Activated B cell treated with CpG ODN at 0.5 μM for 24 hours (primary cell): ENCODE measurements at regions of chr3 and their contacts with region 1.

Region 1: DNA sequence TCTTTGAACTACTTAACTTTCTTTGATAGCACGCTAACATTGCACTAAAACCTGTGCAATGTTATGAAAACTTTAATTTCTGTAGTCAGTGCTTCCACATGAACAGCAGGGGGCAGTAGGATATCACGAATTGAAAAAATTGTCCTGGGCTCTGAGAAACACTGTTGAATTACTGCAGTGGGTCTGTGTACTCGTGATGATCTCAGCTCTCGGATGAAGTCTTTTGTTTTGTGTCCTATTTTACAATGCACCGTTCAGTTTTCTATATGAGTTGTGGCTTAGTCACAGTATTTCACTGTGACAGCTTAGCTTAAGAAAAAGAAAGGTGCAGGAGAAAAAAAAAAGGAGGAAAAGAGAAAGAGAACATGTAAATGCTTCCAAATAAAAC is 141.3 kb upstream of the CCDC54 start:
- DNase-seq: no peak
- ATAC-seq: peak; percentile 60
- H3K4me3 Mint-ChIP-seq: peak overlapping the region; percentile 3
- H3K27ac Mint-ChIP-seq: no peak overlapping the region
- H3K4me1 Mint-ChIP-seq: peaks cover 10% of the 10 kb centered on the region
- H3K27me3 Mint-ChIP-seq: peaks cover 3% of the 10 kb centered on the region
- CTCF ChIP-seq: peak; percentile 83

Region 2: DNA sequence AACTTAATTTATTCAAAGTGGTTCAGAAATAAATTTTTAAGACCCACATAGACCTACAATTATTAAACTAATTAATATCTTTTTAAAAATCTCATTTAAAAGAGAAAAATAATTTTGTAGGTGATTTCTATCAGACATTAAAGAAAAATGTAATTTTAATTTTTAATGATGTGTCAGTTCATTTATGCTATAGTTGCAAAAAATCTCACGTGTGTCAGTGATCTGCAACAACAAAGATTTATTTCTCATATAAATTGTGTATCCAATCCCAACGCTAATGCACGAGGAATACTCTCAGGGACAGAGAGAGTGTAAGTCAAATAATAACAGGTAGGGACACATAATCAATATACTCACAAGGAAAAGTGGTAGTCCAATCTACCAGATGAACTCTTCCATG is 315.3 kb before region 1 on chr3:
- CTCF ChIA-PET with region 1: no interaction called
- POLR2A ChIA-PET with region 1: no interaction called
- intact Hi-C with region 1: no loop called
- DNase-seq: no peak
- ATAC-seq: no peak
- H3K4me3 Mint-ChIP-seq: no peak overlapping the region
- H3K27ac Mint-ChIP-seq: no peak overlapping the region
- H3K4me1 Mint-ChIP-seq: no peaks in the 10 kb centered on the region
- H3K27me3 Mint-ChIP-seq: peaks cover 3% of the 10 kb centered on the region
- CTCF ChIP-seq: no peak

Region 3: GRCh38 chr3:107045791-107046190 is 190.1 kb before region 1 on chr3:
- CTCF ChIA-PET with region 1: no interaction called
- POLR2A ChIA-PET with region 1: no interaction called
- intact Hi-C with region 1: no loop called
- DNase-seq: no peak
- ATAC-seq: no peak
- H3K4me3 Mint-ChIP-seq: no peak overlapping the region
- H3K27ac Mint-ChIP-seq: no peak overlapping the region
- H3K4me1 Mint-ChIP-seq: no peaks in the 10 kb centered on the region
- H3K27me3 Mint-ChIP-seq: no peaks in the 10 kb centered on the region
- CTCF ChIP-seq: no peak

Region 4: DNA sequence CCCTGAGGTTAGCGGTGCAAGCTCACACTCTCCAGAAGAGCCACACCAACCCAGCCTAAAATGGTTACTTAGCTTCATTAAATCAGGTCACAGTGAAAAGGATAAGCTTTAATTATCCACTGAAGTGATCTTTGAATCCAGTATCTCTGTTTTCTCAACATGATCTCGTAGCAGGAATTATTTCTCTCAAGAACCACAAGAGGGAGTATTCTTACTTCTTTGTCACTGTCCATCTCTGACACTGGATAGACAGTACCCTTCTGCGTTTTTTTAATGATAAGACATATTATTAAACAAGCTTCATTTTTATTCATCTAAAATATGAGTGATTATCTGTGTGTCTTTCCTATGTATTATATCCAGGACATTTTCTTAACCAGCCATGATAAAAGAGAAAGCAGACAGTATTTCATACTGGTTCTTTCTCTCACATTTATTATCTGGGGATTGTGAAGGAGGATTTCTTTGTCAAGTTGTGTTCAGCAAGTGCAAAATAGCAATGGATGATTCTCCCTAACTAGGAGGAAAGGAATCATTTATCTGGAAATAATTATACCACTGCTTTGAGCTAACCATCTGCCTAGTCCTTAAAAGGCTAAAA is 36.0 kb after region 1 on chr3:
- CTCF ChIA-PET with region 1: interaction called, 5 read pairs
- POLR2A ChIA-PET with region 1: no interaction called
- intact Hi-C with region 1: loop called (anchors 5 kb)
- DNase-seq: no peak
- ATAC-seq: peak; percentile 54
- H3K4me3 Mint-ChIP-seq: no peak overlapping the region
- H3K27ac Mint-ChIP-seq: no peak overlapping the region
- H3K4me1 Mint-ChIP-seq: peaks cover 2% of the 10 kb centered on the region
- H3K27me3 Mint-ChIP-seq: peaks cover 3% of the 10 kb centered on the region
- CTCF ChIP-seq: no peak

Region 5: GRCh38 chr3:107522510-107523288 is 286.8 kb after region 1 on chr3 and contains the start of gene BBX:
- CTCF ChIA-PET with region 1: no interaction called
- POLR2A ChIA-PET with region 1: interaction called, 3 read pairs
- intact Hi-C with region 1: loop called (anchors 1 kb)
- DNase-seq: peak; percentile 89
- ATAC-seq: peak; percentile 87
- H3K4me3 Mint-ChIP-seq: peak within 1 kb of the TSS; percentile 96
- H3K27ac Mint-ChIP-seq: peak within 1 kb of the TSS; percentile 98
- H3K4me1 Mint-ChIP-seq: peaks cover 37% of the 10 kb centered on the region
- H3K27me3 Mint-ChIP-seq: no peaks in the 10 kb centered on the region
- CTCF ChIP-seq: no peak
- total RNA-seq, gene BBX: 75.8 and 77.5 TPM in 2 replicates

Region 6: GRCh38 chr3:107740992-107741896 is 505.3 kb after region 1 on chr3:
- CTCF ChIA-PET with region 1: interaction called, 21 read pairs
- POLR2A ChIA-PET with region 1: no interaction called
- intact Hi-C with region 1: loop called (anchors 1 kb)
- DNase-seq: no peak
- ATAC-seq: no peak
- H3K4me3 Mint-ChIP-seq: no peak overlapping the region
- H3K27ac Mint-ChIP-seq: no peak overlapping the region
- H3K4me1 Mint-ChIP-seq: peaks cover 31% of the 10 kb centered on the region
- H3K27me3 Mint-ChIP-seq: no peaks in the 10 kb centered on the region
- CTCF ChIP-seq: no peak

Region 7: DNA sequence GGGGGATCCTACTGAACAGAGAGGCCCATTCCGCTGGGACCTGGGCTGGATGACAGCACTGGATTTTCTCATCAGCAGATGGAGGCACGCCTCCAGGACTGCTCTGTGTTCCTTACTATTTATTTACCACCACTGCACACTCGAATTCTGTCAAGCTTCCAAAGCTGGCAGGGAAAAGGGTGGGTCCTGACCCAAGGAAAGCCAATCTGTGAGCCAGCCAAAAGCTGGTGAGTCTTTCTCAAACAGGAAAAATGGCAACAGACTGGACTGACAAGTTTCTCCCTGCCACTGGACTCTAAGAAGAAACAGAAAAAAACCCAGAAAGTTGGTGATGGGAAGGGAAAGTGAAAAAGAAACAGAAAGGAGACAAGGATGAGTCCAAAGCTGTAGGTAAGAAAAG is 817.1 kb after region 1 on chr3:
- CTCF ChIA-PET with region 1: no interaction called
- POLR2A ChIA-PET with region 1: no interaction called
- intact Hi-C with region 1: loop called (anchors 10 kb)
- DNase-seq: no peak
- ATAC-seq: no peak
- H3K4me3 Mint-ChIP-seq: no peak overlapping the region
- H3K27ac Mint-ChIP-seq: peak overlapping the region; percentile 59
- H3K4me1 Mint-ChIP-seq: peaks cover 40% of the 10 kb centered on the region
- H3K27me3 Mint-ChIP-seq: no peaks in the 10 kb centered on the region
- CTCF ChIP-seq: no peak

Region 8: GRCh38 chr3:108406661-108407206 is 1170.8 kb after region 1 on chr3:
- CTCF ChIA-PET with region 1: no interaction called
- POLR2A ChIA-PET with region 1: no interaction called
- intact Hi-C with region 1: loop called (anchors 1 kb)
- DNase-seq: no peak
- ATAC-seq: peak; percentile 87
- H3K4me3 Mint-ChIP-seq: peak overlapping the region; percentile 35
- H3K27ac Mint-ChIP-seq: peak overlapping the region; percentile 87
- H3K4me1 Mint-ChIP-seq: peaks cover 28% of the 10 kb centered on the region
- H3K27me3 Mint-ChIP-seq: no peaks in the 10 kb centered on the region
- CTCF ChIP-seq: no peak

Region 9: DNA sequence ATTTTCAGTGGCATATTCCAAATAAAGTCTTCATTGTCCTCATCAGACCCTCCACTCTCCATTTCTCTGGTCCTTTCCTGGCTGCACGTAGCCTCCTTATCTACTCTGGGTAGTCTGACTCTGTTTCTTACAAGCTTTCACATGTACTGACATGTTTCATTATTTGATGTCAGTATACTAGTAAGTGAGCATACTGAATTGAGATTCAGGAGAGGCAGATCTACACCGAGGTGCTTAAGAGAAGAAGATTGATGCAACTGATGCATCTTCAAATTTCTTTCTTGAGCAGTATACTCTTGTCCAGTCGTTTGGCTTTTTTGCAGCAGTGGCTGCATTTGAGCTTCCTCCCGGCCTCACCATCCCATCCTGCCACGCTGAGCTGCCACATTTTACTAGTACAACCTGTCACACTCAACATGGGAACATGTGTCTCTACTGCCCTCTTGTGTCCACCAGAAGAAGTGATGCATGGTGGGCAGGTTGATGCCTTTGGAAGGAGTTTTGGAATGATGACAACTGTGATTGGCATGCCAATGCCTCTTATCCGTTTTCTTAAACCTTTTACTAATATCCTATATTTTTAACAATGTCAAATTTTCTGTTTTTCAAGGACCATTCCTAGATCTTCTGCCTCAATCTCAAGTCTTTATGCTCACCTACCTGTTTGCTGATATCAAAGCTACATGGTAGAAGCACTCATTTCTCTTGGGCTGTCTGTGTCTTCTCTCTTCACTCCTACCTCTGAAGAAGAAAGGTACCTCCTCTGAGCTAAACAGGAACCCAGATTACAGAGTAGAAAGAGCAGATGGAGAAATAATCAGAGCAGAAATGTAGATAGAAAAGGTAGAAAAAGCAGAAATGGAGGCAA is 1679.1 kb after region 1 on chr3:
- CTCF ChIA-PET with region 1: no interaction called
- POLR2A ChIA-PET with region 1: no interaction called
- intact Hi-C with region 1: loop called (anchors 1 kb)
- DNase-seq: no peak
- ATAC-seq: peak; percentile 78
- H3K4me3 Mint-ChIP-seq: no peak overlapping the region
- H3K27ac Mint-ChIP-seq: no peak overlapping the region
- H3K4me1 Mint-ChIP-seq: no peaks in the 10 kb centered on the region
- H3K27me3 Mint-ChIP-seq: peaks cover 13% of the 10 kb centered on the region
- CTCF ChIP-seq: peak; percentile 32